ENCODE measurements at regions of chr5 and their contacts with region 1.

Region 1: GRCh38 chr5:140145818-140146522 is 20.2 kb downstream of the IGIP start:
- DNase-seq: peak; percentile 24
- H3K4me3 ChIP-seq: peak overlapping the region; percentile 54
- H3K27ac ChIP-seq: no peak overlapping the region
- H3K27me3 ChIP-seq: peaks cover 5% of the 10 kb centered on the region
- CTCF ChIP-seq: peak; percentile 52

Region 2: DNA sequence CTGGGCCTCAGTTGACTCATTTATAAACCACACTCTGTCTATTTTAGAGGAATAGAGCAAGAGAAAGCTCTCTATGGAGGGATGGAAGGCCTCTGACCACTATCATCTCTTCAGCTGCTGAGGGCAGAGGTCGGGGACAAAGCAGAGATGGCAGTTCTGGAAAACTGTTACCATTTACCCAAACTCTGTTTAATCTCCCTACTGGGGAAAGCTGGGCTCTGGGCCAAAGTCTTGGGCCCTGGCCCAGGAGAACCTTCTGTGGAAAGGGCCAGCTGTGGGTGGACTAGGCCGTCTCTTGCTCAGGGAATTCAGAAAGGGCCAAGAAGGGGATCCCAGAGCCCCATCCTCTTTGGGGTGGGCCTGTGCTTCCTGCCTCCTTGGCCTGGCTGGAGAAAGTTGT is 250.3 kb before region 1 on chr5:
- CTCF ChIA-PET with region 1: no interaction called
- POLR2A ChIA-PET with region 1: no interaction called
- DNase-seq: no peak
- H3K4me3 ChIP-seq: no peak overlapping the region
- H3K27ac ChIP-seq: no peak overlapping the region
- H3K27me3 ChIP-seq: peaks cover 57% of the 10 kb centered on the region
- CTCF ChIP-seq: no peak

Region 3: DNA sequence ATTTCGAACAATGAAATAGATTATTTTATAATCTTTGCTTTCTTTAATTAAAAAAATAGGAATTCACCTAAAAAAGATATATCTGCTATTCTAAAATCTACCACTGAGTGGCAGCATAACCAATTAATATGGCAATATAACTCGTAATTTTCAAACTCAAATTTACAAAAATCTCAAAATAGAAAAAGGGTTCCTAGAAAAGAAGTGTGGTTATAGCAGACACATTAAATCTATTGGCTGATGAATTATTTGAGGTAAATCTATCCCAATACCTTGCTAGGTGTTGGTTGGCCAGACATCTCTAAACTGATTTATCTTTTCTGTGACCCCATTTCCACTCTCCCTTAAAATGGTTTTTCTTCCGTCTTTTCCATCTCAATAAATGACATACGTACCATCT is 72.7 kb before region 1 on chr5:
- CTCF ChIA-PET with region 1: interaction called, 161 read pairs
- POLR2A ChIA-PET with region 1: no interaction called
- DNase-seq: no peak
- H3K4me3 ChIP-seq: no peak overlapping the region
- H3K27ac ChIP-seq: no peak overlapping the region
- H3K27me3 ChIP-seq: peaks cover 10% of the 10 kb centered on the region
- CTCF ChIP-seq: peak; percentile 49

Region 4: GRCh38 chr5:140108084-140109017 is 37.6 kb before region 1 on chr5:
- CTCF ChIA-PET with region 1: interaction called, 45 read pairs
- POLR2A ChIA-PET with region 1: interaction called, 4 read pairs
- DNase-seq: no peak
- H3K4me3 ChIP-seq: peak overlapping the region; percentile 79
- H3K27ac ChIP-seq: no peak overlapping the region
- H3K27me3 ChIP-seq: peaks cover 14% of the 10 kb centered on the region
- CTCF ChIP-seq: no peak

Region 5: GRCh38 chr5:140126315-140127012 is 19.5 kb before region 1 on chr5:
- CTCF ChIA-PET with region 1: interaction called, 148 read pairs
- POLR2A ChIA-PET with region 1: no interaction called
- DNase-seq: no peak
- H3K4me3 ChIP-seq: no peak overlapping the region
- H3K27ac ChIP-seq: no peak overlapping the region
- H3K27me3 ChIP-seq: no peaks in the 10 kb centered on the region
- CTCF ChIP-seq: no peak

Region 6: DNA sequence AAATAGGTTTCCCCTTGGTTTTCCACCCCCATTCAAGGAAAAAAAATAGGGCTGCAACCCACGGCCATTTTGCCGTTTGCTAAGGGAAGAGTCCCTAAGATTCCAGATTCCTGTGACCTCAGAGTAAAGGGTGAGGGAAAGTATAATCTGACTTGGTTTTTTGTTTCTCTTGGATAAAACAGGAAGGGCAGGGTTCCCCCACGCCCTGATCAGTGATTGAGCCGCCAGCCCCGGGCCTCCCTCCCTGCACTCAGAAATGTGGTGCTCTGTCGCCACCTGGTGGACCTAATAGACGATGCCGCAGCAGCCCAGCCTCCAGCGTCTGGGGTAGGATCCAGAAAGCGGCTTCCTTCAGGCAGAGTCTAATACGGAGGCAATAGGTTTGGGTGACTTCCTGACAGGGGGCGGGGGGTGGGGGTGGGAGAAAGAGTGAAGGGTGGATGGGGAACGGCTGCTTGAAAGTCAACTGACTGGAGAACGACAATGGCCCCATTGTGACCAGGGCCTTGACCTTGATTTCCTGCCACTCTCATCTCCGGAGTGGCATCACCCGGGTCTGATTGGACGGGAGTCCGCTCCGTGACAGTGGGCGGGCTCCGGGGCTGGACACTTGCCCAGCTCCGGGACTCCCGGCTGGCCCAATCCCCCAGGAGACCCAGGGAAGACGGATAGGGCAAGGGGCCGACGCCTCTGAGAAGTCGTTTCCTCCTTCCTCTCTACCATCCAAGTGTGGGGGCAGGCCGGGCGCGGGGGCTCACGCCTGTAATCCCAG is 11.2 kb after region 1 on chr5:
- CTCF ChIA-PET with region 1: interaction called, 64 read pairs
- POLR2A ChIA-PET with region 1: no interaction called
- DNase-seq: no peak
- H3K4me3 ChIP-seq: peak overlapping the region; percentile 34
- H3K27ac ChIP-seq: no peak overlapping the region
- H3K27me3 ChIP-seq: peaks cover 8% of the 10 kb centered on the region
- CTCF ChIP-seq: peak; percentile 94

Region 7: GRCh38 chr5:140178086-140178410 is 32.1 kb after region 1 on chr5:
- CTCF ChIA-PET with region 1: interaction called, 13 read pairs
- POLR2A ChIA-PET with region 1: interaction called, 5 read pairs
- DNase-seq: no peak
- H3K4me3 ChIP-seq: no peak overlapping the region
- H3K27ac ChIP-seq: no peak overlapping the region
- H3K27me3 ChIP-seq: no peaks in the 10 kb centered on the region
- CTCF ChIP-seq: no peak

Measured in AG04450 (cell line).